Tibial artery (tissue), 4 donors: ENCODE measurements at regions of chr11 and their contacts with region 1.

Region 1: GRCh38 chr11:17386331-17387084 is 2.0 kb downstream of the KCNJ11 start:
- DNase-seq: peak; percentile 47 to 87
- H3K4me3 ChIP-seq: peak overlapping the region; percentile 27 to 28
- H3K27ac ChIP-seq: peak overlapping the region; percentile 74 to 75
- H3K4me1 ChIP-seq: peaks cover 0 to 39% (median 16%) of the 10 kb centered on the region in 4 donors
- H3K27me3 ChIP-seq: no peaks in the 10 kb centered on the region
- CTCF ChIP-seq: peak; percentile 72 to 85

Region 2: GRCh38 chr11:17405232-17406005 is 18.9 kb after region 1 on chr11:
- intact Hi-C with region 1: loop called (anchors 2 kb)
- DNase-seq: peak; percentile 78 to 95
- H3K4me3 ChIP-seq: peak overlapping the region in 1 of 2 donors; percentile 6
- H3K27ac ChIP-seq: peak overlapping the region; percentile 62 to 78
- H3K4me1 ChIP-seq: peaks cover 0 to 22% (median 19%) of the 10 kb centered on the region in 4 donors
- H3K27me3 ChIP-seq: no peaks in the 10 kb centered on the region
- CTCF ChIP-seq: peak; percentile 39 to 49

Region 3: DNA sequence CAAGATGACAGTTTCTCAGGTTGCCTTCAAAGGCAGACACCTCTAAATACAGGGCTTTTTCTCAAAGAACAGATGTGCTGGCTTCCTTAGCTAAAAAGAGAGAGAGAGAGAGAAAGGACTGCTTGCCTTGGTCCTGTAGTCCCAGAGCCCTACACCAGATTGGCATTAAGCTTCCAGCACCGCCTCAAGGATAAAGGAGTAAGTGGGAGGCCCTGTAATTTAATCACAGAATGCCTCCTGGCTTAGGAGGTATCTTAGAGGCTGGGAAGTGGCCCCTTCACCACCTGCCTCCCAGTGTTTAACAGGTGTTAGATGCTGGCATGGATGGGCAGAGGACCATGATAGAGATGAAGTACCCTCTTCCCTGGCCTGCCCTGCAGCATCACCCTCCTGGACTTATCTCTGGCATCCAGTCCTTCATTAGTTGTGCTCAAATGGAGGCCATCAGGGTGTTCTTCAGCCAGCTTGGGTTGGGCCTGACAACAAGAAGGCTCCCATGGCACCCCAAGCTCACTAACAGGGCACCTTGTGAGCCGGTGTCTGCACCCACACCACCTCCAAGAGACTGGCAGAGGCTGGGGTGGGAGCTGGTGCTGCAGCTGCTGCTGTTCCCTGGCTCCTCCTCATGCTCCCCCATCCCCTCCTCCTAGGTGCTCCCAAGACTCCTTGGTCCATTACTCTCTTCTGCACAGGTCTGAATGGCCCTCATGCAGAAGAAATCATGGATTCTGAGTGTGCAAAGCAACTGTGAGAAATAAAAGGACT is 57.6 kb after region 1 on chr11:
- intact Hi-C with region 1: no loop called
- DNase-seq: no peak
- H3K4me3 ChIP-seq: no peak overlapping the region
- H3K27ac ChIP-seq: no peak overlapping the region
- H3K4me1 ChIP-seq: no peaks in the 10 kb centered on the region
- H3K27me3 ChIP-seq: peaks cover 0 to 22% of the 10 kb centered on the region in 2 donors
- CTCF ChIP-seq: no peak